HCT116 (cell line): ENCODE measurements at regions of chr17 and their contacts with region 1.

Region 1: GRCh38 chr17:68909066-68909465 is 46.1 kb downstream of the ABCA8 start:
- DNase-seq: peak; percentile 80
- ATAC-seq: peak; percentile 68
- H3K4me3 ChIP-seq: peak overlapping the region in 1 of 2 experiments; percentile 4; a peak in 2 of 4 replicates
- H3K27ac ChIP-seq: peak overlapping the region; percentile 47; the same call in 1 of the 2 replicates
- H3K4me1 ChIP-seq: peaks cover 6 to 25% of the 10 kb centered on the region in 2 experiments; a peak in 3 of 4 replicates
- H3K27me3 ChIP-seq: no peaks in the 10 kb centered on the region
- CTCF ChIP-seq: no peak
- POLR2A ChIP-seq: no peak
- RAD21 ChIP-seq: 0 out of 2 replicates have a peak, but pooled peaks have one; percentile 12

Region 2: DNA sequence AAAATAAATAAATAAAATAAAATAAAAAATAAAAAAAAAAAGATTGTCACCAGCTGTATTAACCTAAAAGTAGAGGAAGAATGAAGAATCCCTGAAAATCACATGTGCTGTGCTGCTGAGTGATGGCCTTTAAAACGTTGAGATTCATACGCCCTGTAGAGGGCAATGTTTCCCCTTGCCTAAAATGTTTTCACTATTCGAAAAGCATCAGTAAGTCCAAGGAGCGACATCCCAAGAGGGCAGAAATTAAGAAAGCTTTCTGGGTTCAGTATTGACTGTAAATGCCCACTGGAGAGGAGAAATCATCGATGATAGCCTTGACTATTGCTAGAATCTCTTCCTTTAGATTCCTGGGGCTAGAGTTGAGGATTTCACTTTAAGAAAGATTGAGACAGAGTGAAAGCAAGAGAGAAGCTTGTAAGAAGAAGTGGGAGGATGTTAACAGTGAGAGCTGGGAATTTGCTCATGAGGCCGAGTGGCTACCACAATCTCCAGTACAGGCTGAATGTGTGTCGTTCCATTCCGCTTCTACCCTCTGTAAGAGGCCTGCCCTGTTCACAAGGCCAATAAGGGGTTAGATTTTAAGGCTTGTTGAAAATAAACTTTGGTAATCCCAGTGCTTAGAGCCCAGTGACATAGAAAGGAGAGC is 137.1 kb before region 1 on chr17:
- CTCF ChIA-PET with region 1: interaction called, 47 read pairs
- POLR2A ChIA-PET with region 1: interaction called, 3 read pairs
- RAD21 ChIA-PET with region 1: interaction called, 3 to 4 read pairs
- intact Hi-C with region 1: loop called (anchors 1 kb)
- DNase-seq: peak; percentile 62
- ATAC-seq: peak; percentile 67
- H3K4me3 ChIP-seq: peak overlapping the region; percentile 4 to 10; a peak in 1 of 4 replicates
- H3K27ac ChIP-seq: no peak overlapping the region
- H3K4me1 ChIP-seq: peaks cover 4 to 9% of the 10 kb centered on the region in 2 experiments; a peak in 3 of 4 replicates
- H3K27me3 ChIP-seq: no peaks in the 10 kb centered on the region
- CTCF ChIP-seq: peak; percentile 65 to 84 (median 78)
- POLR2A ChIP-seq: no peak
- RAD21 ChIP-seq: peak; percentile 77

Region 3: DNA sequence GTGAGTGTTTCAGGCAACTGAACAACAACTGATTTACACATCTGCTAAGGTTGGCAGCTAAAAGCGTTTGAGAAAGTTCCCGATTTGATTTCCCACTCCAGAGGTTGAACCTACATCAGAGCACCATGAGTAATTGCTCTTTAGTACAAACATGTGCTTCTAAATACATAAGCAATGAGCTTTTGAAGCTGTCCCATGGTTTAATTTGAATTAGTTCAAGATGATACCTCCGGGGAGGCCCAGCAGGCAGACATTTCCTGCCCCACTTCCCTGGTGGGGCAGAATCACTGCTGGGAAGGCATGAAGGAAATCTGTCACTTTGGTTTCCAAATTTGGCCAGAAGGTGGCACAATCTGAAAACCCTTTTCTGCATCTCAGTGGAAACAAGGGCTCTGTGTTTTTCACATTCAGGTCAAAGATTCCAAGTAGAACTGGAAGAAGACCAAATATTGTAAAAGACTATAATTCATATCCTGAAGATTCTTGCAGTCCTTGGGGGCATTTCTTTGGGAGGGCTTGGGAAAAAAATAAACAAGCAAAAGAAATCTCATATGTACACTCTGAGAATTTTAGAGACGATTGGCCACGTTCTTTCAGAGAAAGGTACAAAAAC is 131.7 kb before region 1 on chr17:
- CTCF ChIA-PET with region 1: interaction called, 47 read pairs
- POLR2A ChIA-PET with region 1: interaction called, 3 read pairs
- RAD21 ChIA-PET with region 1: interaction called, 3 to 4 read pairs
- intact Hi-C with region 1: loop called (anchors 1 kb)
- DNase-seq: peak; percentile 51
- ATAC-seq: peak; percentile 46
- H3K4me3 ChIP-seq: no peak overlapping the region
- H3K27ac ChIP-seq: no peak overlapping the region
- H3K4me1 ChIP-seq: peaks cover 4 to 9% of the 10 kb centered on the region in 2 experiments; a peak in 3 of 4 replicates
- H3K27me3 ChIP-seq: no peaks in the 10 kb centered on the region
- CTCF ChIP-seq: peak; percentile 77 to 95 (median 87)
- POLR2A ChIP-seq: no peak
- RAD21 ChIP-seq: peak; percentile 94

Region 4: GRCh38 chr17:68794636-68795434 is 114.2 kb before region 1 on chr17:
- CTCF ChIA-PET with region 1: interaction called, 9 read pairs
- POLR2A ChIA-PET with region 1: no interaction called
- RAD21 ChIA-PET with region 1: no interaction called
- intact Hi-C with region 1: loop called (anchors 5 kb)
- DNase-seq: no peak
- ATAC-seq: peak; percentile 83
- H3K4me3 ChIP-seq: no peak overlapping the region
- H3K27ac ChIP-seq: no peak overlapping the region
- H3K4me1 ChIP-seq: peaks cover 0 to 4% of the 10 kb centered on the region in 2 experiments; a peak in 2 of 4 replicates
- H3K27me3 ChIP-seq: no peaks in the 10 kb centered on the region
- CTCF ChIP-seq: peak; percentile 49 to 82 (median 64); a peak in 4 of 6 replicates
- POLR2A ChIP-seq: no peak
- RAD21 ChIP-seq: peak; percentile 82

Region 5: GRCh38 chr17:68924786-68925720 is 16.0 kb after region 1 on chr17:
- CTCF ChIA-PET with region 1: interaction called, 12 read pairs
- POLR2A ChIA-PET with region 1: interaction called, 3 read pairs
- RAD21 ChIA-PET with region 1: no interaction called
- intact Hi-C with region 1: no loop called
- DNase-seq: no peak
- ATAC-seq: 0 out of 2 replicates have a peak, but pooled peaks have one; percentile 42
- H3K4me3 ChIP-seq: no peak overlapping the region
- H3K27ac ChIP-seq: no peak overlapping the region
- H3K4me1 ChIP-seq: no peaks in the 10 kb centered on the region
- H3K27me3 ChIP-seq: no peaks in the 10 kb centered on the region
- CTCF ChIP-seq: 0 out of 6 replicates have a peak, but pooled peaks of 1 of the 3 experiments have one; percentile 14
- POLR2A ChIP-seq: no peak
- RAD21 ChIP-seq: no peak

Region 6: DNA sequence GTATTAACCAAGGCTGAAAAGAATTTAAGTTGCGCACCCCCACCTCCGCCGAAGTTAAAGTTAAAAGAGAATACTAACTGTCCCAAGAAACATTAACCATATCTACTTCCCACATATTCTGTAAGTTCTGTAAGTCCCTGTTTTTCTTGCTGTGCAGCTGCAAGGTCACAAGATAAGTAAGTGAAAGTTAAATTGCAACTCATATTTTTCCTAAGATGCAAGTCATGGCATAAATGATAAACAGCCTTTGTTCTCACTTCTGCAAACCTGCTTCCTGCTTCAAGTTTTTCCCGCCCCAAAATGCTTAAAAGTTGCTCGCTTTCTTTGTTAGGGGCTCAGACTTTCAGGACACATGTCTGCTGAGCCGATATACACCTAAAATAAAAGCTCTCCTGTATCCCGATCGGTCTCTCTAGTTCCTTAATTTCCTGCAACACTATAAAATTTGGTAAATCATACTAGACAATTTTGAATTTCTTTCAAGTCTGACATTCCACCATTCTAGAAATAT is 184.3 kb after region 1 on chr17:
- CTCF ChIA-PET with region 1: no interaction called
- POLR2A ChIA-PET with region 1: no interaction called
- RAD21 ChIA-PET with region 1: no interaction called
- intact Hi-C with region 1: no loop called
- DNase-seq: no peak
- ATAC-seq: no peak
- H3K4me3 ChIP-seq: no peak overlapping the region
- H3K27ac ChIP-seq: no peak overlapping the region
- H3K4me1 ChIP-seq: no peaks in the 10 kb centered on the region
- H3K27me3 ChIP-seq: no peaks in the 10 kb centered on the region
- CTCF ChIP-seq: no peak
- POLR2A ChIP-seq: no peak
- RAD21 ChIP-seq: no peak

Region 7: DNA sequence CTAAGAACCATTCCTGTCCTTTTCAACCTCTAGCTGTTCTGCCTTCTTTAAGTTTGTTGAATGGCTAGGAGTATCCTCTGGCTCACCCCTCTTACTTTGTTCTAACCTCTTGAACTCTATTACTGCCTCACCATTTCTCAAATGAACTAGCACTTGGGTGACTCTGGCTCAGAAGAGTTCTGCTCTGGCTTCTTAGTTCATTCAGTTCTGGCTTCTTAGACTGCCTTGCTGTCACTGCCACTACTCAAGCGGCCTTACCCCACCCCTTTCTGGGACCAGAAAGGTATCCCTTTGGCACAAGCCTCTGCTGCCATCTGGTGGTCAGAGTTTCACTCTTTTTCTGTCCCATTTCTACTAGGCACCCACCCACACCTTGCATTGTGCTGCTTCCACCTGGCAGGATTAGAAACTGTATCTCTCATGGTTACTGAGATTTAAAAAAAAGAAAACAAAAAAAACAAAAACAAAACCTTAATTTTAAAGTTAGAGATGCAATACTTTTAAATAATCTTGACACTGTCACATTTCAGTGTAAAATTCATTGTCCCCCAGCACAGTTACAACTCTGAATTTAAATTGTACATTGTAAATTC is 326.4 kb after region 1 on chr17:
- CTCF ChIA-PET with region 1: interaction called, 3 read pairs
- POLR2A ChIA-PET with region 1: no interaction called
- RAD21 ChIA-PET with region 1: no interaction called
- intact Hi-C with region 1: loop called (anchors 2 kb)
- DNase-seq: peak; percentile 89
- ATAC-seq: peak; percentile 99
- H3K4me3 ChIP-seq: no peak overlapping the region
- H3K27ac ChIP-seq: no peak overlapping the region
- H3K4me1 ChIP-seq: 0 out of 4 replicates have a peak, but pooled peaks cover 0 to 3% of the 10 kb centered on the region in 2 experiments
- H3K27me3 ChIP-seq: no peaks in the 10 kb centered on the region
- CTCF ChIP-seq: peak; percentile 82 to 97 (median 97)
- POLR2A ChIP-seq: no peak
- RAD21 ChIP-seq: peak; percentile 98